ENCODE measurements at regions of chr17 and their contacts with region 1.

Region 1: GRCh38 chr17:17694169-17695081 is 13.2 kb downstream of the RAI1 start:
- DNase-seq: peak; percentile 78 to 87 (median 80)
- ATAC-seq: peak; percentile 38 to 79 (median 68)
- H3K4me3 ChIP-seq: peak overlapping the region; percentile 48 to 90 (median 72)
- H3K27ac ChIP-seq: peak overlapping the region; percentile 86 to 99 (median 98)
- H3K4me1 ChIP-seq: peaks cover 29 to 94% (median 78%) of the 10 kb centered on the region in 12 donors
- H3K27me3 ChIP-seq: no peaks in the 10 kb centered on the region
- CTCF ChIP-seq: peak in 2 of 12 donors; percentile 11 to 17
- POLR2A ChIP-seq: peak in 1 of 2 donors; percentile 71

Region 2: DNA sequence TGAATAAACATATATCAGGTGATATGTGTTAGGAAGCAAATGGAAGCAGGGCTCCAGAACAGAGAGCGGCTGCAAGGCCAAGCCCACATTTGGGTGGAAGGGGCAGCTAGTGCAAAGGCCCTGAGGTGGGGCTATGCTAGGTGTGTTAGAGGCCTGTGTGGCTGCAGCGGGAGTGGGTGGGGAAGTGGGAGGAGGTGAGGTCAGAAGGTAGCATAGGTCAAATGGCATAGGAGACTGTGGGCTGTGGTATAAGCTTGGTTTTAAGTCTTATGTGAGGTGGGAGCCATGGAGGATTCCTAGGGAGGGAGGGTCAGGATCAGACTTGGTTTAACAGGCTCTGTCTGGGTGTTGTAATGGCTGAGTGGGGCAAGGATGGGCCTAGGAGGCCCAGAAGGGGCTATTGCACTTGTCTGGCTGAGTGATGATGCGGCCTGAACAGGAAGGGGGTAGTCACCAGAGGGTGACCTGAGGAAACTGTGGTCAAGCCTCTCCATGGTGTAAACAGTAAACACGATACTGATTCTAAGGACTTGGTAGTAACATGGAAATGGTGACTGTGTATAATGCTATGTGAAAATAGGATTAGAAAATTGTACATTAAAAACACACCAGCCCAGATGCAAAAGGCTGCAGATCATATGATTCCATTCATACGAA is 18.0 kb after region 1 on chr17:
- intact Hi-C with region 1: loop called in 1 of 10 experiments (anchors 2 kb)
- DNase-seq: no peak
- ATAC-seq: no peak
- H3K4me3 ChIP-seq: no peak overlapping the region
- H3K27ac ChIP-seq: peak overlapping the region in 4 of 12 donors; percentile 7 to 88 (median 50)
- H3K4me1 ChIP-seq: peaks cover 0 to 62% (median 38%) of the 10 kb centered on the region in 12 donors
- H3K27me3 ChIP-seq: no peaks in the 10 kb centered on the region
- CTCF ChIP-seq: no peak
- POLR2A ChIP-seq: no peak

Region 3: DNA sequence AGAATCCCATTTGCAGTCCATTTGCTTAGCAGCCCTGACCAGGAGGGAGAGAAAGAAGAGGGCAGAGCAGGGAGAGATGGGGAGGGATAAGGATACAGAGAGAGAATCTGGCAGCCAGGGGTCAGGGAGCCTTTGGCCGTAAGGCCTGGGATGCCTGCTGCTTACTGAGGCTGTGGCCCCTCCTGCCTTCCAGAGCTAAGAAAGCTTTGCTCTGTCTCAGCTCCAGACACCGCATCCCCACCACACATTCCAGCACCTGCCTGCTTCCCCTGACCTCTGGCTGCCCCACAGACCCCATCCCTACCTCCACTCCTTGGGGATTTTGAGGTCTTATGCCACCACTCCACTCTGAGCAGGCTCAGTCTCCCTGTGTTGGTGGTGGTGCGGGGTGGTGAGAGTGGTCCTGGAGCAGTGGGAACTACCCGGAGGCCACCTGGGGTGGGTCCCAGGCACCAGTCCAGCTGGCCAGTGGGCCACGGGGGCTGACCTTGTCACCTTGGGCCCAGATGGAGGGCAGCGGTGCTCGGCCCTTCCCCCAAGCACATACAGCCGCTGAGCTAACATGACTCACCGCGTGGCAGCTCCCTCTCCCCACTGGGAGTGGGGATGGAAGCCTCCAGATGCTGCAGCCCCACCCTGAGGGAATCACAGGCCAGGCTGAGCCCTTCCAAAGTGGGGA is 45.1 kb after region 1 on chr17:
- intact Hi-C with region 1: loop called in 1 of 10 experiments (anchors 5 kb)
- DNase-seq: peak in 2 of 5 donors; percentile 61 to 70
- ATAC-seq: peak; percentile 35 to 73 (median 60)
- H3K4me3 ChIP-seq: no peak overlapping the region
- H3K27ac ChIP-seq: peak overlapping the region in 11 of 12 donors; percentile 15 to 77 (median 55)
- H3K4me1 ChIP-seq: peaks cover 23 to 78% (median 62%) of the 10 kb centered on the region in 12 donors
- H3K27me3 ChIP-seq: no peaks in the 10 kb centered on the region
- CTCF ChIP-seq: no peak
- POLR2A ChIP-seq: no peak

Region 4: DNA sequence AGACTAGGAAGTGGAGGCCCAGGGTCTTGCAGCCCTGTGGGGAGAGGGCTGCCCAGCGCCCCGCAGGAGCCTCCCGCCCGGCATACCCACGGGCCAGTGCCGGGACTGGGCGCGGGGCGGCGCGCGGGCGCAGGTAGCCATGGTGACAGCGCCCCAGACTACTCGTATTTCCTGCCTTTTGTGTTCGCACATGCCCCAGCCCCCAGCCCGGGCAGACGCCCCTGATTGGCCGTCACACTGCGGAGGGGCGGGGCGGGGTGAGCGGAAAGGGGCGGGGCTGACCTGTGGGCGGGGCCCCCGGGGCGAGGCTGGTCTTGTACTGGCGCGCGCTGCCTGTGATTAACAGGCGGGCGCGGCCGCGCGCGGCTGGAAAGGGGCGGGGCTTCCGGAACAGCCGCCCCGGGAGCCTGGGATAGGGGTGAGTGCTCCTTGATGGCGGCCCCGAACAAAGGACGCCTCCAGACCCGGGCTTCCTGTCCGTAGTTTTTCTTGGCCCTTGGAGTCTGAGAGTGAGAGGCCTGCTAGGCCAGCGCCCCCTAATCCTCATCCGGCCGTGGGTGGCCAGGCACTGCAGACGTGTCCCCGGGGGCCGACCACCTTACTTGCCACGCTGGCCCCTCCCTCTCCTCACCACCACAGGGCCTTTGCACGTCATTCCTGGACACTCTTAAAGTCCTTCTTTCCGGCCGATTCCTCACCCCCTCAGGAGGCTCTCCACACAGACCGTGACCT is 57.8 kb after region 1 on chr17:
- intact Hi-C with region 1: loop called in 2 of 10 experiments (anchors 2 to 5 kb)
- DNase-seq: peak; percentile 95 to 98 (median 96)
- ATAC-seq: peak; percentile 83 to 90 (median 89)
- H3K4me3 ChIP-seq: peak overlapping the region in 11 of 12 donors; percentile 8 to 61 (median 49)
- H3K27ac ChIP-seq: peak overlapping the region; percentile 67 to 93 (median 85)
- H3K4me1 ChIP-seq: peaks cover 3 to 93% (median 49%) of the 10 kb centered on the region in 12 donors
- H3K27me3 ChIP-seq: no peaks in the 10 kb centered on the region
- CTCF ChIP-seq: peak in 9 of 12 donors; percentile 10 to 45 (median 26)
- POLR2A ChIP-seq: peak in 1 of 2 donors; percentile 51

Region 5: GRCh38 chr17:17783116-17783824 is 88.8 kb after region 1 on chr17:
- intact Hi-C with region 1: loop called in 4 of 10 experiments (anchors 5 to 10 kb)
- DNase-seq: peak; percentile 82 to 91 (median 86)
- ATAC-seq: peak in 3 of 4 donors; percentile 23 to 55 (median 53)
- H3K4me3 ChIP-seq: peak overlapping the region; percentile 40 to 73 (median 62)
- H3K27ac ChIP-seq: peak overlapping the region; percentile 80 to 98 (median 92)
- H3K4me1 ChIP-seq: peaks cover 7 to 84% (median 61%) of the 10 kb centered on the region in 12 donors
- H3K27me3 ChIP-seq: peaks cover 0 to 15% (median 0%) of the 10 kb centered on the region in 9 donors
- CTCF ChIP-seq: peak in 4 of 12 donors; percentile 22 to 52 (median 42)
- POLR2A ChIP-seq: no peak

Region 6: GRCh38 chr17:17792551-17793377 is 98.3 kb after region 1 on chr17:
- intact Hi-C with region 1: loop called in 3 of 10 experiments (anchors 5 to 10 kb)
- DNase-seq: peak in 3 of 5 donors; percentile 48 to 66 (median 61)
- ATAC-seq: peak; percentile 39 to 61 (median 47)
- H3K4me3 ChIP-seq: peak overlapping the region in 4 of 12 donors; percentile 6 to 30 (median 18)
- H3K27ac ChIP-seq: peak overlapping the region in 11 of 12 donors; percentile 43 to 71 (median 63)
- H3K4me1 ChIP-seq: peaks cover 14 to 55% (median 48%) of the 10 kb centered on the region in 12 donors
- H3K27me3 ChIP-seq: no peaks in the 10 kb centered on the region
- CTCF ChIP-seq: no peak
- POLR2A ChIP-seq: no peak